ENCODE measurements at regions of chr7 and their contacts with region 1.

Region 1: GRCh38 chr7:100469227-100470044 is 5.4 kb upstream of the SPACDR start:
- DNase-seq: peak; percentile 88 to 94 (median 92)
- H3K4me3 ChIP-seq: no peak overlapping the region
- H3K27ac ChIP-seq: peak overlapping the region in 1 of 2 donors; percentile 42
- H3K4me1 ChIP-seq: peaks cover 7% of the 10 kb centered on the region
- H3K27me3 ChIP-seq: no peaks in the 10 kb centered on the region
- CTCF ChIP-seq: peak; percentile 90 to 93 (median 92)
- EP300 ChIP-seq: no peak
- POLR2A ChIP-seq: no peak

Region 2: DNA sequence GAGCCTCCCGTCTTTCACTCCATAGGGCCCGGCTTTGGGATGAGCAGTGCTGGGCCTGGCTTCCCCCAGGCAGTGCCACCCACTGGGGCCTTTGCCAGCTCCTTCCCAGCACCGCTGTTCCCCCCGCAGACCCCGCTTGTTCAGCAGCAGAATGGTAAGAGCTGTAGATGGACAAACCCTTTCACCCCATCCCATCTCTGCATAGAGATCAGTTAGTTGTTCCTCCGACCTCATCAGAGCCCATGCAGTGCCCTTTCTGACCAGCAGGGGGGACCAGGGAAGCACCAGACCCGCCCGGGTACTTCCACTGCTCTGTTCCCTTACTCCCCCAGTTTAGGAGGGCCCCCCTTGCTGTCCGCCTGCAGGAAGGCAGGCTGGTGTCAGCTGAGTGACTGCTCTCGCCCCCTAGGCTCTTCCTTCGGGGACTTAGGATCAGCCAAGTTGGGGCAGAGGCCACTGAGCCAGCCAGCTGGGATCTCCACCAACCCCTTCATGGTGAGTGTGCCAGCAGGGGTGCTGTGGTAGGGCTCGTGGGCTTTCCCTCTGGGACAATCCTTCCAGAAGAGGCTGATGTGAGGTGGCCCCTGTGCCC is 94.5 kb after region 1 on chr7:
- intact Hi-C with region 1: loop called (anchors 5 kb)
- DNase-seq: peak; percentile 74 to 88 (median 85)
- H3K4me3 ChIP-seq: no peak overlapping the region
- H3K27ac ChIP-seq: peak overlapping the region in 1 of 2 donors; percentile 18
- H3K4me1 ChIP-seq: peaks cover 15% of the 10 kb centered on the region
- H3K27me3 ChIP-seq: no peaks in the 10 kb centered on the region
- CTCF ChIP-seq: peak; percentile 79 to 90 (median 87)
- EP300 ChIP-seq: no peak
- POLR2A ChIP-seq: no peak

Region 3: GRCh38 chr7:100719523-100720319 is 250.3 kb after region 1 on chr7:
- intact Hi-C with region 1: loop called in 2 of 4 experiments (anchors 10 kb)
- DNase-seq: no peak
- H3K4me3 ChIP-seq: peak overlapping the region; percentile 22
- H3K27ac ChIP-seq: no peak overlapping the region
- H3K4me1 ChIP-seq: peaks cover 2% of the 10 kb centered on the region
- H3K27me3 ChIP-seq: no peaks in the 10 kb centered on the region
- CTCF ChIP-seq: no peak
- EP300 ChIP-seq: no peak
- POLR2A ChIP-seq: no peak